ENCODE measurements at regions of chr3 and their contacts with region 1.

Region 1: GRCh38 chr3:143627336-143627735 is 220.9 kb downstream of the SLC9A9 start:
- DNase-seq: no peak
- ATAC-seq: no peak
- H3K4me3 Mint-ChIP-seq: no peak overlapping the region
- H3K27ac Mint-ChIP-seq: no peak overlapping the region
- H3K4me1 Mint-ChIP-seq: no peaks in the 10 kb centered on the region
- H3K27me3 Mint-ChIP-seq: no peaks in the 10 kb centered on the region
- CTCF ChIP-seq: no peak

Region 2: GRCh38 chr3:142148792-142149672 is 1478.3 kb before region 1 on chr3 and contains the start of gene TFDP2:
- CTCF ChIA-PET with region 1: no interaction called
- POLR2A ChIA-PET with region 1: interaction called, 11 read pairs
- intact Hi-C with region 1: no loop called
- DNase-seq: peak; percentile 78
- ATAC-seq: peak; percentile 99
- H3K4me3 Mint-ChIP-seq: peak within 1 kb of the TSS; percentile 86
- H3K27ac Mint-ChIP-seq: peak within 1 kb of the TSS; percentile 72
- H3K4me1 Mint-ChIP-seq: peaks cover 14% of the 10 kb centered on the region
- H3K27me3 Mint-ChIP-seq: no peaks in the 10 kb centered on the region
- CTCF ChIP-seq: no peak
- total RNA-seq, gene TFDP2: 20.0 and 23.1 TPM in 2 replicates